ENCODE measurements at regions of chr3 and their contacts with region 1.

Region 1: DNA sequence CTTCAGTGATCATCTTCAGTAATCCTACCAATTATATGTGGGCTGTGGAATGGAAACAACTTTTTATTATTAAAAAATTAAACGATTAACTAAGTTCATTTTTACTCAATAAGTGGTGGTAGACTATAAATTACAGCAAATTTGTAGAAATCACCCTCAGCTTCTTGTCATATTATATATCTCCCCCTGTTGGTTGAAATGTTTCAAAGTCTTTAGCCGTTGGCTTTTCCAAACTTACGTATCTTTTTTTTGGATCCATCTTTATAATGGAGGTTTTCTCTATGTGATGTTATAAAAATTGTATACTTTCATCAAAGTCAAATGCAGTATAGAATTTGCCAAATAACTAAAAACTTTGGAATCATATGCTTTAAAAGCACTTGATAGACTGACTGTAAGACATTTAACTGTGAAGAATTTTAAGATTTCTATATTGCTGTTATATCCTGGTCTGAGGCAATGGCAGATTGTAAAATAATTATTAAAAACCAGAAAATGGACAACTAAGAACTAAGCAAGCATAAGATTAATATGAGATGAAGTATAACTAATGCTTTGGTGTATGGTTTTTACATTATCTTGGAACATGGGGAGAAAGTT is 44.7 kb downstream of the ATP11B start:
- DNase-seq: no peak
- H3K4me3 ChIP-seq: no peak overlapping the region
- H3K27ac ChIP-seq: no peak overlapping the region
- H3K4me1 ChIP-seq: no peaks in the 10 kb centered on the region
- H3K27me3 ChIP-seq: no peaks in the 10 kb centered on the region
- CTCF ChIP-seq: peak; percentile 44 to 53 (median 46)
- EP300 ChIP-seq: no peak
- POLR2A ChIP-seq: no peak

Region 2: DNA sequence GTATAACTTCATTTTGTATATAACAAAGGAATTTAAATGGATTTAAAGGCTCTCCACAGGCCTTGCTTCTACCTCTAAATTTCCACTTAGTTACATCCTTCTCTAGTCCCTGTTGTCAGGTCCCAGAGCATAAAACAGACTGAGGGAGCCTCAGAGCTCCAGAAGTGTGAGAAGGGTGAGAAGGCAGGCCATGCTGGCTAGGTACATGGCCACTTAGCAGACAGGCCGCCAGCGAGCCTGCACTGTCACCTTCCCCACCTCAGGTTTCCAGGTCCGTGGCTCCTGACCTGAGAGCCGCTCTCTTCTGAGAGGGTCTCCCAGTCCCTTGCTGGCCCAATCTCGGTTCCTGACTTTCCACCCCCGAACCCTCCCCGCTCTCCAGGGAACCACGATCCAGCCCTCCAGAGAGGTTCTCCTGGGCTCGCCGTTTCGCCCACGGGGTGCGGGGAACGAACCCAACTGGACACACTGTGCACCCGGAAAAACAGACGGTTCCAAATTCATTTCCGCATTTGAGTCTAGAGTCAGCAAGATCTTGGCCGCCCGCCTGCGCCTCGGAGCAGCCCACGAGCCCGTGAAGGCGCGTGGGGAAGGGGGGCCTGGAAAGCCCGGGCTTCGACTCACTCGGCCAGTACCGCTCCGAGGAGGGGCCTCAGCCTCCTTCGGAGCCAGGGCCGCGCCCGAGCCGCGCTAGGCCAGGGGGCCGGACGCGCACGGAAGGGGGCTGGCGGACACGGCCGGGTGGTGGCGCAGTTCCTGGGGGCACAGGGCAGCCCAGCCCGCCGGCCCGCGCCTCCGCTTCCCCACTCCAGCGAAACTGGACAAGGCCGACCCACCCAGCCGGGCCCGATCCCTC is 1142.9 kb before region 1 on chr3:
- in situ Hi-C with region 1: loop called in 1 of 4 experiments (anchors 10 kb)
- intact Hi-C with region 1: no loop called
- DNase-seq: peak; percentile 32
- H3K4me3 ChIP-seq: peak overlapping the region in 3 of 4 donors; percentile 22 to 46 (median 28)
- H3K27ac ChIP-seq: peak overlapping the region in 1 of 4 donors; percentile 5
- H3K4me1 ChIP-seq: peaks cover 10 to 18% (median 14%) of the 10 kb centered on the region in 4 donors
- H3K27me3 ChIP-seq: peaks cover 76% of the 10 kb centered on the region
- CTCF ChIP-seq: no peak
- EP300 ChIP-seq: no peak
- POLR2A ChIP-seq: no peak

Region 3: DNA sequence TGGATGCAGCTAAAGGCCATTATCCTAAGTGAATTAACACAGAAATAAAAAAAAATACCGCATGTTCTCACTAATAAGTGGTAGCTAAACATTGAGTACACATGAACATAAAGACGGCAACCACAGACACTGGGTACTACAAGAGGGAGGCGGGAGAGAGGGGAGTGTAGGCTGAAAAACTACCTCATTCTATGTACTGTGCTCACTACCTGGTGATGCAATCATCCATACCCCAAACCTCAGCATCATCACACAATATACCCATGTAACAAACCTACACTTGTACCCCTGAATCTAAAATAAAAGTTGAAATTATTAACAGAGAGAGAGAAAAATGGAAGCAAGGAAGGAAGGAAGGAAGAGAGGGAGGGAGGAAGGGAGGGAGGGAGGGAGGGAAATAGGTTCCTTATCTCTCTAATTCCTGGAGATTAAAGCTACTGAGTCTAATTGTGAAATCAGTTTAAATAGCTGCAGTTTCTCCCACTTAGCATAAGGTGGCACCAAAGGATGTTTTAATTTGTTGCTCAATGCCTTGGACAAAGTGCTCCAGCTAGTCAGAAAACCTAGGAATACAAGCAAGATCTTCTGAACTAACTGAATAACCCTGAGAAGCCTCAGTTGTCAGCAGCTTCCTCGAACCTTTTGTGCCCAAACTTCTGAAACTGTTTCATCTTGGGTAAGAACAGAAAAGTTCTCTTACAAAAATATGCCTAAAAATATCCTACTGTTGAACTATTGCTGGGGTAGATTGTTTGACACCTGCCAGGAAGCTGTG is 124.0 kb before region 1 on chr3:
- in situ Hi-C with region 1: loop called (anchors 10 kb)
- intact Hi-C with region 1: no loop called
- DNase-seq: no peak
- H3K4me3 ChIP-seq: no peak overlapping the region
- H3K27ac ChIP-seq: peak overlapping the region in 1 of 4 donors; percentile 22
- H3K4me1 ChIP-seq: peaks cover 0 to 36% (median 15%) of the 10 kb centered on the region in 4 donors
- H3K27me3 ChIP-seq: no peaks in the 10 kb centered on the region
- CTCF ChIP-seq: peak; percentile 43 to 69 (median 57)
- EP300 ChIP-seq: no peak
- POLR2A ChIP-seq: no peak

Measured in transverse colon (tissue), 4 donors.